HEK293 (cell line): ENCODE measurements at regions of chr18 and their contacts with region 1.

Region 1: DNA sequence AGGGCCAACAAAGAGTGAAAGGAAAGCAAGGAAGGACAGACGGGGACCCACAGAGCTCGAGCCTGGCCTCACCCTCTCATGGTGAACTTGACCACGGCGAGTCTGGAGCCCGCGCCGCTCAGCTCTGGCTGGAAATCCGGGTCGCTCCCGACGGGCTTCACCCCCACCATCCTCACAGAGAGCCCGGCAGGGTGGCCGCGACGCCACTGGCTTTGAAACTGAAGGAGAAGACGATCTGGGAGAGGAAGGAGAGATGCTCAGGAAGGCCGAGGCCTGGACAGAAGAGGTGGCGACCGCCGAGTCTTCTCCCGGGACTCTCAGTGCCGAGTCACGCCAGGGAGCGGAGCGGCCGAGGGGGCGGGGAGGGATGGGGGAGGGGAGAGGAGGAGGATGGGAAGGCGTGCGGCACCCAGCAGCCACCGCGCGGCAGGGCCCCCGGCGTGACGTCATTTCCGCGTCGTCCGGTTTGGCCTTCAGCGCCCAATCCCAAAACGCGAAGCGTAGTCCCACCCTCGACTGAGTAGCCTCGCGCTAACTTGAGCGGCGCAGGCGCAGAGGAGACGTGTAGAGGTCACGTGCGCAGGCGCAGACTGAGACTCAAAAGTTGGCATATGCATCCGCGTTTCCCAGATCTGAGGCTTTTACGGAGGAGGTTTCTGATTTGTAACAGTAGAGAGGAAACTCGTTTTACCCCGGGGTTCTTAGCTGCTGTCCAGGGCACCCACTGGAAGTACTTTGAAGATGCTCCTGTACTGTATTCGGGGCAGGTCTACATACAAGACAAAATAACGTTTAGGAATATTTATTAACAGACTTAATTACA is at the start of gene TXNL1:
- H3K4me3 ChIP-seq: peak within 1 kb of the TSS; percentile 59
- H3K27ac ChIP-seq: peak within 1 kb of the TSS; percentile 98
- H3K4me1 ChIP-seq: peaks cover 8% of the 10 kb centered on the region; the same call in 1 of the 2 replicates
- CTCF ChIP-seq: no peak

Region 2: DNA sequence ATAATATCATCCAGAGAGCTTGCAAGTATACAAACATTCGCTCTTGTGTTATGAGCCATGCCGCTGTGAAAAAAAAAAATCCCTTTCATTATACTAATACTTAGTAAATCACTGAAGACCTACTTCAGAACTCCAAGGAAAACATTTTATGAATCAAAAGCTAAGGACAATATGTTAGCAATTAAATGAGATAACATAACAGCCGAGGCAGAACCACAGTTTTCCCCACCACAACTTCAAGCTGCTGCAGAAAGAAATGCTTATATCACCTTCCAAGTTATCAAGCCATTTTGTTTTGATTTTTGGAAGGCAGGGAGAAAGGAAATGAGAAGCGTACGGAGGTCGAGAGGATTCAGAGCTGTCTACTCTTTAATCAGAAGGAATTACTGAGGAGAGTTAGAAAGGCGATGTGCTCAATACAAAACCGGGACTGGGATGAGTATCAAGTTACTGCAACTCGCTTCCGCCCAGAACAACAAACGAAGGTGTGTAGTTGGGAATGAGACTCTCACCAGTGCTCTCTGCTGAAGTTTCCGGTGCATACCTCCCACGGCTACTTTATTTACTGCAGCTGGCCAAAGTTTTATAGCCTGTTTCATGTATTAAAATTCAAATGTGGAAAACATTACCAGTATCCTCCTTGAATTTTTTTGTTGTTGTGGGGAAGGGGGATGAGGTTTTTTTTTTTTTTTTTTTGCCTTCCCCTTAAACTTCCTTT is 1387.1 kb before region 1 on chr18:
- CTCF ChIA-PET with region 1: no interaction called
- POLR2A ChIA-PET with region 1: interaction called, 10 read pairs
- H3K4me3 ChIP-seq: no peak overlapping the region
- H3K27ac ChIP-seq: peak overlapping the region; percentile 18; the same call in 1 of the 2 replicates
- H3K4me1 ChIP-seq: peaks cover 9% of the 10 kb centered on the region
- CTCF ChIP-seq: no peak

Region 3: DNA sequence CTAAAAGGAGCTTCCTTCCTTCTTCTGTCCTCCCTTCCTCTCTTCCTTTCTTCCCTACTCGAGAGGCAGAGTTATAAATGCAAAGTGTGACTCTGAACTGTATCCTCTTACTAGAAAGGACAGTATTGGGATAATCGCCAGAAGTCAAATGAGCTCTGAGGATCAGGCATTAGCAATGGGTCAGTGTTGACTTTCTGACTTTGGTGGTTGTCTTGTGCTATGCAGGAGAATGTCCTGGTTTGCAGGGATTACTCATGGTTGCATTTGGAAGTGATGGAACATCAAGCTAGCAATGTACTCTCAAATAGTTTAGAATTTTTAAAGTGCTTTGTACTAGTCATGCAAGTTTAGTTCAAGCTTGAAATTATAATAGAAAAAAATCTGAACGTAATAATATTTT is 115.7 kb before region 1 on chr18:
- CTCF ChIA-PET with region 1: no interaction called
- POLR2A ChIA-PET with region 1: no interaction called
- H3K4me3 ChIP-seq: no peak overlapping the region
- H3K27ac ChIP-seq: no peak overlapping the region
- H3K4me1 ChIP-seq: no peaks in the 10 kb centered on the region
- CTCF ChIP-seq: no peak

Region 4: DNA sequence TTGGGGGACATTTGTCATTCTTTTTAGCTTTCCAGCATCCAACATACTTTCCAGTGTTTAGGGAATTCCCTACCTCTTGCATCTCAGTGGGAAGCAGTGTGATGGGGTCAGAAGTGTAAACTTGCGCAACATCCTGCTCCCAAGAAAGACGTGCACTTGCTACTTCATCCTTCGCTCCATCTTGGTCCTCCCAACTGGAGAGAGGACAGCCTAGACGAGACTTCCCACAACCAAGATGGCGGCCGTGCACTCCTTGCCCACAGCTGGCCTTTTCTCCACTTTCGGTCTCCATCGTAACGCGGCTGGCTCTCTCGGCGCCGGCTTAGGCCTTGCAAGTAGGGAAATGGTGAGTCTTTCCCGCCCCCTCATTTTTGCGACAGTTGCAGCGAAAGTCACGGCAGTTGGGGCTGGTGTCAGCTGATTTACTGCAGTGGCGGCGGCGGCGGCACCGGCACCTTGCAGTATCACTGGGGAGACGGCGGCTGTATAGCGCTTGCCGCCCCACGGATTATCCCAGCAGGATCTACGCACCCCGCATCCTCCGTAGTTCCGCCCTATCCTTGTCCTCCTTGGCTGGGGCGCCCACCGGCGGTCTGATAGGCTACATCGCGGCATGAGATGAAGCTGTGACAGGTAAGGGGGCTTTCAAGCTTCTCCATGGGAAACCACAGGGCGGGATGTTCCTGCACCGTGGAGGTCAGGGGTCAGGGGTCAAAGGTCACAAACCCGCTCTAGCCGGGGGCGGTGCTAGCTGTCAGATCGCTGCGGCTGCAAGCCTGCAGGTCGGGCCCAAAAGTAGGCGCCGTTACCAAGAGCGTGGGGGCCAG is 12.7 kb after region 1 on chr18 and contains the start of gene WDR7:
- CTCF ChIA-PET with region 1: interaction called, 5 read pairs
- POLR2A ChIA-PET with region 1: interaction called, 40 read pairs
- H3K4me3 ChIP-seq: peak within 1 kb of the TSS; percentile 73
- H3K27ac ChIP-seq: peak within 1 kb of the TSS; percentile 76
- H3K4me1 ChIP-seq: no peaks in the 10 kb centered on the region
- CTCF ChIP-seq: peak; percentile 55; the same call in 1 of the 2 replicates

Region 5: GRCh38 chr18:56789004-56789888 is 150.8 kb after region 1 on chr18:
- CTCF ChIA-PET with region 1: no interaction called
- POLR2A ChIA-PET with region 1: no interaction called
- H3K4me3 ChIP-seq: no peak overlapping the region
- H3K27ac ChIP-seq: no peak overlapping the region
- H3K4me1 ChIP-seq: no peaks in the 10 kb centered on the region
- CTCF ChIP-seq: no peak